AG04449 (cell line): ENCODE measurements at regions of chr12 and their contacts with region 1.

Region 1: GRCh38 chr12:13038491-13039161 is 5.6 kb upstream of the FAM234B start:
- DNase-seq: peak; percentile 65
- H3K4me3 ChIP-seq: no peak overlapping the region
- CTCF ChIP-seq: no peak

Region 2: DNA sequence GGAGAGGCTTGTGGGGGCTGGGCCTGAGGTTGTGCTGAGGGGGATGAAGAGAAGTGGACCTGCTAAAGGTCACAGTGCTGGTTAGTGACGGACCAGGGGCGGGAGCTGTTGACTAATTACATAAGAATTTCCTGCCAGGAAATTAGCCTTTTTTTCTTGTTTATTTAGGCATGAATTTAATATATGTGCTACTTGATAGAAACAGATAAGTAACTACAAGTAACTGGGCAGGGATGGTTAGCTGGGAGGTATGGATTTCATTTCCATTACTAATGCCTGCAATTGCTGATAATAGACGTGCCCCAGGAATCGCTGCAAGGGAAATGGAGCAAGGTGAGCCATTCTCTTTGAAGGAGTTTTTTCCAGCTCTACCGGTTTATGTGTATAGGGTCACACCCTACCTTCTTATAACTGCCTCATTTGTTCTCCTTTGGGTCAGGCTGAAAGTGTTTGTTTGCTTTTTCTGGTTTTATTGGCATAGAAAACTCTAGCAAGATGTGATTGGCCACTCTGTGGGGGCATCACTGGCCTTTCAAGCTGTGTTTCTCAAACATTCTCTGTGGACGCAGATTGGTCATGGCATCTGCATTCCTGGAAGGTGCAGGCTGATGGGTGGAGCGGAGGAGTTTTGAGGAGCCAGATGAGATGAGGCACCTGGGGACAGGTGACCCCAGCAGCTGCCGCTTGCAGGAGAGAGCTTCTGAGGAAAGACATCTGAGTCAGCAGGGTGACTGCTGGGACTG is 166.3 kb before region 1 on chr12:
- CTCF ChIA-PET with region 1: no interaction called
- POLR2A ChIA-PET with region 1: no interaction called
- DNase-seq: peak; percentile 66
- H3K4me3 ChIP-seq: no peak overlapping the region
- CTCF ChIP-seq: no peak

Region 3: DNA sequence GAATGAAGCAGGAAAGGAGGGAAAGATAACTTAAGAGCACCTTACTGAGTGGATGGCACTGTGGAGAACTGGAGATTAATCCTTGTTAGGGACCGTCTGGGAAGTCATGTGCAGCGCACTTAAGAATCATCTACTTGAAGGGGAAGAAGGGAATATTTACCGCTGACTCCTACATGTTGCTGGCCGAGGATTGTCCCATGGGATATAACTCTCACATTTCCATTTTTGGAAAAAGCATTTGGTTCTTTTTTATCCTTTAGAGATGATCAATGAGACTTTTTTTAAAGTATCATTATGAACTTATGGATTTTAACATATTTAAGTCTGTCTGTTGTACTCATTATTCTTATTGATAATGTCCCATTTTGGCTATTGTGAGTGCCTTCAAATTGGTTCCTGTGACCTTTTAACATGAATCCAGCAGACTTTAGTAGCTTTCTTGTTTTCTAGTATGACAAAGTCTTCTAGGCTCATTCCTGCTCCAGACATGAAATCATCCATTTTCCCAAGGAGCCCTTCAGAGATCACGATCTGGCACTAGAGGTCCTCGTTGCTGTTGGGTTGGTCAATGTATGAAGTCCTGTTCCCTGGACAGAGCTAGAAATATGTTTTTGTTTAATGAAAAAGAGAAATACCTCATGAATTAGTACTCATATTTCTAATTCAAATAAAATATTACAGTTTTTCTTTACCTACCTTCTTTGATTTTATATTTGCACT is 14.7 kb before region 1 on chr12:
- CTCF ChIA-PET with region 1: interaction called, 17 read pairs
- POLR2A ChIA-PET with region 1: no interaction called
- DNase-seq: no peak
- H3K4me3 ChIP-seq: no peak overlapping the region
- CTCF ChIP-seq: peak; percentile 48

Region 4: DNA sequence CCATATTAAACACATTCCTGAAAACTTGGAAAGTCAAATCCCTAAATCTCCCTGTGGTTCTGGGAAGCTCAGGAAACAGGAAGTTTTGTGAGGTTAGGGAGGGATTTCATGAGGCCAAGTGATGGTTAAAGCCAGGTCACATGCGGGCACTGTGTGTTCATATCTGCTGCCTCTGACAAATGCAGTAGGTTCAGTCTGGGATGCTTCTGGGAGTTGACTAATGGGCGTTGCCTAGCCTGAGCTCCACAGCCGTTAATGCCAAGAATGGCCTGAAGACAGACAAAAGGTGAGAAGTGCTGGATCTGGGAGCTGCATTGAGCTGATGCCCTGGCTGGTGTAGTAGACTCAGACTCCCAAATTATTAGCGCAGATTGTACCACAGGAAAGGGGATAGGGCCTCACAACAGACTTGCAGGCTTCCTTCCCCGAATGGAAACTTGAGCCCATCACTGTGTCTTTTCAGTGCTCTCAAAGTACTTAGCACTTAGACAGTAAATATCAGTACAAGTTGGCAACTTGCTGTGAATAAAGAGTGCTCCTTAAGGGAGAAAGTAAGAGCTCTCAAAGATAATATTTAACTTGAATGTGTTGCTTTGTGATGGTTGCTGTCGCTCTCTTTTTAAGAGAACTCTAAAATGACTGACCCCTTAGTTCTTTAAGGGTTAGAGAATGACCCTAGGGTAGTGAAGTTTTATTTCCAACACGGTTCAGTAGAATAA is 47.5 kb after region 1 on chr12:
- CTCF ChIA-PET with region 1: no interaction called
- POLR2A ChIA-PET with region 1: no interaction called
- DNase-seq: no peak
- H3K4me3 ChIP-seq: no peak overlapping the region
- CTCF ChIP-seq: no peak